Mucosa of descending colon (tissue), 3 donors: ENCODE measurements at regions of chr17 and their contacts with region 1.

Region 1: DNA sequence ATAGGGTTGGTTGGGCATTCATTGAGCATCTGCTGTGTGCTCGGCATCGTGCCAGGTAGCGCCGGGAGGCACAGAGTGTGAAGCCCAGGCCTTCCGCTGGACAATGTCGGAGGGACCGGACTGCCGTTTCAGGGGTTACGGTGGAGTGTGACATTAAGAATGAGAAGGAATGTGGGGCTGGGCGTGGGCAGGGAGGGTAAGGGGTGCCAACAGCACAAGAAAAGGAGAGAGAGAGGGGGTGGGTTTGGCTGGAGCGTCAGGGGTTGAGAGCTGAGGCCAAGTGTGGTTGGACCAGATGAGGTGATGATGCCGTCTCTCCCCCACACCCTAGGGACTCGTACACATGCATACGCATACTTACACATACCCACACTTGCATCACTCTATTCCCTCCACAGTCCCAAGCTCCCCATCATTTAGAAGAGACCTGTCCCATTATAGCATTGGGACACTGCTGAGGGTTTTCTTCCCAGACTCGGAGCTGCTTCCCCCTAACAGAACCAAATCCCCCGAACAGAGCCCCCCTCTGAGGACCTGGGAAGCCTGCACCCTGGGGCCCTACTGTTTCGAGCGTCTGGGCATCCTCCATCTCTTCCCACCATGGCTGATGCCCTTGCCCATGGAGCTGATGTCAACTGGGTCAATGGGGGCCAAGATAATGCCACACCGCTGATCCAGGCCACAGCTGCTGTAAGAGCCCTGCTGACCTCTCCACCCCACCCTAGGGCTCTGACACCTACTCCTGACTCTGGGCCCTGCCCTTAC is 3.3 kb upstream of the KCTD11 start:
- DNase-seq: no peak
- ATAC-seq: no peak
- H3K4me3 ChIP-seq: no peak overlapping the region
- H3K4me1 ChIP-seq: peaks cover 19% of the 10 kb centered on the region
- CTCF ChIP-seq: no peak

Region 2: GRCh38 chr17:7279448-7279847 is 69.2 kb before region 1 on chr17:
- intact Hi-C with region 1: loop called in 1 of 2 experiments (anchors 10 kb)
- DNase-seq: peak in 1 of 3 donors; percentile 65
- ATAC-seq: peak; percentile 41
- H3K4me3 ChIP-seq: no peak overlapping the region
- H3K4me1 ChIP-seq: peaks cover 27% of the 10 kb centered on the region
- CTCF ChIP-seq: no peak